Activated CD4-positive, alpha-beta memory T cell treated with anti-CD3 and anti-CD28 coated beads for 36 hours (primary cell): ENCODE measurements at regions of chr20 and their contacts with region 1.

Region 1: DNA sequence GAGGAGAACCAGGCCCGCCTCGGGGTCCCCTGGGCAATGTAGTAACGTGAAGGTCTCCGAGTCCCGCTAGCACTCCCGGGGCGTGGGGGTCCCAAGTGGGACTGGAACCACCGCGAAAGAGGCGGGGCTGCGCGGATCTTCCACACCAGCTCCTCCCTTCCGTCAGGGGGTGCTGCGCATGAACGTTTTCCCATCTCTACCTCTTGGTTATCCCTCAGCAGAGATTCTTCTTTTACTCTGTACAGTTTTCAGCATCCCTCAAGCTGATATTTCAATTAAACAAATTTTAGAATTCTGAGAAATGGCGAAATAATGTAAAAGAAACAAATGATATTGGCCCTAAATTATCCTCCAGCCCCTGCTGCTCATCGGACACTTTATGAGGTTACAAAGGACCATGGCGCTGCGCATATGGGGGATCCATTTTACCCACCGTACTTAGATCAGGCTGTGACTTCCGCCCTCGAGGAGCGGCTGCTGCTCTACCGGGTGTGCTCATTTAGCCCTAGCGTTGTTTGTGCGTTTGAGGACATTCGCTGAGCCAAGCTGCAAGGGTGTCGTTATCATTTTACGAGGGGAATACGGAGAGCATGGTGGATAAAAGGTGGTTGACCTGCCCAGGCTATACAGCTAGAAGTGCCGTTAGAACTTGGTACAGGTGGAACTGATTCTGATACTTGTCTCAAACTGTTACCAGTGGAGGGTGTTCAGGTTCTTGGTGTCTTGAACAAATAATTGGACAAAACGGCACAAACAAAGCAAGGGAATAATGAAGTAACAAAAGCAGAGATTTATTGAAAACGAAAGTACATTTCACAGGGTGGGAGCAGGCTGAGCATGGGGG is 75.2 kb upstream of the CHD6 start:
- DNase-seq: peak; percentile 87
- H3K4me3 Mint-ChIP-seq: peak overlapping the region; percentile 90
- H3K27ac Mint-ChIP-seq: peak overlapping the region; percentile 92
- H3K4me1 Mint-ChIP-seq: peaks cover 18% of the 10 kb centered on the region
- H3K27me3 Mint-ChIP-seq: peaks cover 2% of the 10 kb centered on the region

Region 2: GRCh38 chr20:41339507-41340326 is 353.6 kb before region 1 on chr20:
- CTCF ChIA-PET with region 1: no interaction called
- POLR2A ChIA-PET with region 1: no interaction called
- intact Hi-C with region 1: loop called (anchors 5 kb)
- DNase-seq: peak; percentile 90
- H3K4me3 Mint-ChIP-seq: peak overlapping the region; percentile 63
- H3K27ac Mint-ChIP-seq: no peak overlapping the region
- H3K4me1 Mint-ChIP-seq: peaks cover 5% of the 10 kb centered on the region
- H3K27me3 Mint-ChIP-seq: peaks cover 7% of the 10 kb centered on the region

Region 3: DNA sequence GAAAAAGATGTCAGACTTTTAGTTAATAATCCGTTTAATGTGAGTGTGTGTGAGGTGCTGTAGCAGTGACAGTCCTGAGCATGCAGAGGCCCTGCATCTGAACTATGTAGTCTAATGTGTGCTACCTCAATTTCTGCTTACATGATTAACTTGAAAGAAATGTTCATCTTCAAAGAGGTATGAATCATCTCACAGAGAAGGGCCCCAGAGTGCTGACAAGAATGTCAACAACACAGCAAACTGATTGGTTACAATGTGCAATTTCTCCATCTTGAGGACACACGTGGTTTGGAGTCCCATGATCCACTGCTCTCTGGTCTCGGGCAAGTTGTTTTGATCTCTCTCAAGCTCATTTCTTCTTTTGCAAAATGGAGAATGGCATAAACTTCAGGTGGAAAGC is 265.1 kb before region 1 on chr20:
- CTCF ChIA-PET with region 1: interaction called, 4 read pairs
- POLR2A ChIA-PET with region 1: interaction called, 4 read pairs
- intact Hi-C with region 1: loop called (anchors 2 kb)
- DNase-seq: peak; percentile 56
- H3K4me3 Mint-ChIP-seq: no peak overlapping the region
- H3K27ac Mint-ChIP-seq: peak overlapping the region; percentile 75
- H3K4me1 Mint-ChIP-seq: peaks cover 31% of the 10 kb centered on the region
- H3K27me3 Mint-ChIP-seq: no peaks in the 10 kb centered on the region

Region 4: DNA sequence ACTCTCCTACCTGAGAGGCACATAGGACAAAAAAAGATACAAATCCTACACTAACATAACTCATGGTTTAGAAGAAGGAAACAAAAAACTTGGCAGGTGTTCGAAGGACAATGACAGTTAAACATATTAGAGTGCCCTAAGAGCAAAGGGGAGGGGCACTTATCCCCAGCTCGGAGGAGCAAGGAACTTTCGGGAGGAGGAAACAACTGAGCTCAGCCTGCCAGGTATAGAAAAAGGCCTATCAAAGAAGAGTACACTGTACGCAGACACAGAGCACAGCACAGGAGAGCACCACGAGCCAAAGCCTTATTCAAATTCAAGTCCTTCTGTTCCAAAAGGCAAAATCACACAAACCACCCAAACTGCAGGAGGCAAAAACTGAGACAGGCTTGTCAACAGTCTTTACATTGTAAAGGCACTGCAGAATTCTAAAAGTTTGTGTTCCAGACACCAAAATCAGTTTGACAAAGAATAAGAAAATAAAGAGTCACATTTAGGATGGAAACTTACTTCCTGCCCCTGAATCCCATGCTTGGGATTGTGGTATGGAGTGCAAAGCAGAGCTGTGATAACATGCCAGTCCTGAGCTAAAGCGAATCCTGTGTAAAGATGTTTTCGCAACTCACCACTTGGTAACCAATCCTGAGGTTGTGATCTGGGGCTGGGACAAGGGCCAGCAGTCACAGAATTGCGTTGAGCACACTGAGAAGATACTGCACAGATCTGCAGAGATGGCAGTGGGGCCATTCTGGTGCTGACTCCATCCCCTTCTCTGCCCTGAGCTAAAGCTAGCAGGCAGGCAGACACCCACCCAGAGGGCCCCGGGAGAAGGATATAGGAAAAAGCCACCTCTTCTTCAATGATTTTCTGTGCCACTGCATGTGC is 183.8 kb before region 1 on chr20:
- CTCF ChIA-PET with region 1: interaction called, 3 read pairs
- POLR2A ChIA-PET with region 1: no interaction called
- intact Hi-C with region 1: loop called (anchors 10 kb)
- DNase-seq: no peak
- H3K4me3 Mint-ChIP-seq: no peak overlapping the region
- H3K27ac Mint-ChIP-seq: no peak overlapping the region
- H3K4me1 Mint-ChIP-seq: peaks cover 9% of the 10 kb centered on the region
- H3K27me3 Mint-ChIP-seq: no peaks in the 10 kb centered on the region

Region 5: GRCh38 chr20:41617931-41618806 is 75.2 kb before region 1 on chr20 and contains the start of gene CHD6:
- CTCF ChIA-PET with region 1: interaction called, 10 read pairs
- POLR2A ChIA-PET with region 1: interaction called, 10 read pairs
- intact Hi-C with region 1: loop called (anchors 1 kb)
- DNase-seq: peak; percentile 100
- H3K4me3 Mint-ChIP-seq: peak within 1 kb of the TSS; percentile 88
- H3K27ac Mint-ChIP-seq: peak within 1 kb of the TSS; percentile 75
- H3K4me1 Mint-ChIP-seq: peaks cover 34% of the 10 kb centered on the region
- H3K27me3 Mint-ChIP-seq: no peaks in the 10 kb centered on the region
- total RNA-seq, gene CHD6: 25.2 to 29.6 TPM

Region 6: DNA sequence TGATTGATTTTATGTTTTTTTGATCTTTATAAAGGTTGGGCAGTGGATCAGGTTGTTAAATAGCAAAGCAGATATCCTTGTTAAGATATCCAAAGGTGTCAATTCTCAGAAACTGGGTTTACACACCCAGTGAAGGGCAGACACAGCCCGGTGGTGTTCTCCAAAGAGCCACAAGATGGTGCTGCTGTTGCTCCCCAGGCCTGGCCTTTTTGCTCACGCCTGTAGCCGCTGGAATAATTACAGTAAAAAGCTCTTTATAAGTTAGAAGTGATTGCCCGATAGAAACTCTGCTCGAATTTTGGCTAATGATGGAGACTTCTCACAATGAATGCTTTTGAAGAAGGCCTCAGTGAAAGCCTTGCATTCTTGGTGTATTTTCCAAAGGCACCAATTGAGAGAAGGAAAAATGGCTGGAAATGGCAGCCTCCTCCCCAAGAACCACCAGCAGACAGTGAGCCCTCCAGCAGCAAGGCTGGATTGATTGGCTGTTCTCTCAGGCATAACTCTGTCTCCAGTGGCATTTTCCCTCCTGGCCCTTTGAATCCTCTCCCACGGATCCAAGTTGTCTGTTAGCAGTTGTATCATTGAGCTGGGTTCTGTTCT is 45.3 kb after region 1 on chr20:
- CTCF ChIA-PET with region 1: interaction called, 12 read pairs
- POLR2A ChIA-PET with region 1: no interaction called
- intact Hi-C with region 1: no loop called
- DNase-seq: peak; percentile 64
- H3K4me3 Mint-ChIP-seq: no peak overlapping the region
- H3K27ac Mint-ChIP-seq: no peak overlapping the region
- H3K4me1 Mint-ChIP-seq: no peaks in the 10 kb centered on the region
- H3K27me3 Mint-ChIP-seq: no peaks in the 10 kb centered on the region

Region 7: GRCh38 chr20:41900201-41900691 is 206.9 kb after region 1 on chr20:
- CTCF ChIA-PET with region 1: no interaction called
- POLR2A ChIA-PET with region 1: no interaction called
- intact Hi-C with region 1: no loop called
- DNase-seq: no peak
- H3K4me3 Mint-ChIP-seq: no peak overlapping the region
- H3K27ac Mint-ChIP-seq: no peak overlapping the region
- H3K4me1 Mint-ChIP-seq: no peaks in the 10 kb centered on the region
- H3K27me3 Mint-ChIP-seq: no peaks in the 10 kb centered on the region